PC-3 (cell line): ENCODE measurements at regions of chr20 and their contacts with region 1.

Region 1: GRCh38 chr20:21505161-21505809 is 8.6 kb downstream of the NKX2-2 start:
- DNase-seq: peak; percentile 74
- ATAC-seq: peak; percentile 63
- H3K4me3 ChIP-seq: peak overlapping the region; percentile 55
- H3K27ac ChIP-seq: no peak overlapping the region
- H3K4me1 ChIP-seq: peaks cover 8% of the 10 kb centered on the region
- H3K27me3 ChIP-seq: peaks cover 38% of the 10 kb centered on the region
- CTCF ChIP-seq: peak; percentile 98

Region 2: GRCh38 chr20:21053002-21053762 is 452.1 kb before region 1 on chr20:
- CTCF ChIA-PET with region 1: no interaction called
- POLR2A ChIA-PET with region 1: no interaction called
- intact Hi-C with region 1: loop called (anchors 5 kb)
- DNase-seq: no peak
- ATAC-seq: no peak
- H3K4me3 ChIP-seq: no peak overlapping the region
- H3K27ac ChIP-seq: no peak overlapping the region
- H3K4me1 ChIP-seq: no peaks in the 10 kb centered on the region
- H3K27me3 ChIP-seq: peaks cover 42% of the 10 kb centered on the region
- CTCF ChIP-seq: peak; percentile 32

Region 3: GRCh38 chr20:21450572-21450971 is 54.7 kb before region 1 on chr20:
- CTCF ChIA-PET with region 1: no interaction called
- POLR2A ChIA-PET with region 1: no interaction called
- intact Hi-C with region 1: no loop called
- DNase-seq: peak; percentile 76
- ATAC-seq: peak; percentile 99
- H3K4me3 ChIP-seq: no peak overlapping the region
- H3K27ac ChIP-seq: no peak overlapping the region
- H3K4me1 ChIP-seq: peaks cover 4% of the 10 kb centered on the region; the same call in 1 of the 2 replicates
- H3K27me3 ChIP-seq: no peaks in the 10 kb centered on the region
- CTCF ChIP-seq: no peak